ENCODE measurements at regions of chr1 and their contacts with region 1.

Region 1: GRCh38 chr1:228349701-228350171 is 56.9 kb downstream of the TRIM11 start:
- DNase-seq: no peak
- H3K4me3 ChIP-seq: no peak overlapping the region
- H3K27ac ChIP-seq: no peak overlapping the region
- H3K4me1 ChIP-seq: no peaks in the 10 kb centered on the region
- H3K27me3 ChIP-seq: no peaks in the 10 kb centered on the region
- CTCF ChIP-seq: no peak

Region 2: DNA sequence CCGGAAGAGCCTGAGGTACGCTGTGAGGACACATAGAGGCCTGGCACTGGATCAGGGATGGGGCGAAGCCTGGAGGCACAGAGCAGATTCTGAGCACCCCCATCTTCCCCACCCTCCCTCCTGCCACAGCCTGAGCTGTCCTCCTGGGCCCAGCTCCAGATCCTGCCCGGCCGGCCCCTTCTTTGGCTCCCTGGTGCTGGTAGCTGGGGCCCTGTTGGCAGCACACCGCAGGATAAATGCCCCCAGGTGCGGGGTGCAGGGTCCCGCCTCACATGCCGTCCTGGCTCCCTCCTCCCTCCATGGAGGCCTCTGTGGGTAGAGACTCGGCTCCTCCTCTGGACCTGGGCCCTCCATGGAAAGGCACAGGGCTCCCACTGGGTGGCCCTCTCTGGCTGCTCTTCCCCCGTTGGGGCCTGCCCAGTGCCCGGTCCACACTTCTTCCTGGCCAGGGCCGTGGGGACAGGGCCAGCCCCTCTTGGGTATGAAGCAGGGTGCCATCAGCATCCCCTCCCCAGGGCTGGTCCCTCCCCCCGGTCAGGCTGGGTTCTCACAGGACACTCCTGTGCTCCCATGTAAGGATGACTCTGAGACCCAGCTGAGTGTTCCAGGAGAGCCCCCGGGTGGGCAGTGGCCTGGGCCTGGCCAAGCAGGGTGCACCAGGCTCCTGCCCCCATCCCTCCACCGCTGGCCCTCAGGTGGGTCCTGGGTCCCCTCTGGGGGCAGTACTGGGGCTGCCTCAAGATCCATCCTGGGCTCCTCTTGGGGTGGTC is 143.0 kb before region 1 on chr1:
- CTCF ChIA-PET with region 1: no interaction called
- POLR2A ChIA-PET with region 1: no interaction called
- intact Hi-C with region 1: no loop called
- DNase-seq: no peak
- H3K4me3 ChIP-seq: no peak overlapping the region
- H3K27ac ChIP-seq: no peak overlapping the region
- H3K4me1 ChIP-seq: no peaks in the 10 kb centered on the region
- H3K27me3 ChIP-seq: no peaks in the 10 kb centered on the region
- CTCF ChIP-seq: no peak

Region 3: DNA sequence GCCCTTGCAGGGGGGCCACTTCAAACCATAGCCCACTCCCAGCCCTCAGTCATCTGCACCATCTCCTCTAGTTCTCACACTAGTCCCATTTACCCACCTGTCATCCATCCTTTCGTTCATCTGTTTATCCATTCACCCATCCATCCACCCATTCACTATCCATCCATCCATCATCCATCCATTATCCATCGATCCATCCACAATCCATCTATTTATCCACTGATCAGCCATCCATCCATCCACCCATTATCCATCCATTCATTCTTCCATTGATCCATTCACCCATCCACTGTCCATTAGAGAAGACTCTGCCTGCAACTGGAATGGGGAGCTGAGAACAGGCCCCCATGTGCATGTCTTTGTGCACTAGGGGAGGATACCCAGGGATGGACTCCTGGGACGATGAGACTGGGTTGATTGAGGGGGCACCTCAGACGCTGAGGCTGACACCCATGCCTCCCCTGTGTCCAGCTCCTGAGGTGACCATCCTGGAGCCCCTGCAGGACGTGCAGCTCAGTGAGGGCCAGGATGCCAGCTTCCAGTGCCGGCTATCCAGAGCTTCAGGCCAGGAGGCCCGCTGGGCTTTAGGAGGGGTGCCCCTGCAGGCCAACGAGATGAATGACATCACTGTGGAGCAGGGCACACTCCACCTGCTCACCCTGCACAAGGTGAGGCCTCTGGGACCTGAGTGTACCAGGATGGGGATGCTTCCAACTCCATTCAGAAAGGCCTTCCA is 40.9 kb before region 1 on chr1:
- CTCF ChIA-PET with region 1: no interaction called
- POLR2A ChIA-PET with region 1: no interaction called
- intact Hi-C with region 1: loop called (anchors 10 kb)
- DNase-seq: no peak
- H3K4me3 ChIP-seq: no peak overlapping the region
- H3K27ac ChIP-seq: no peak overlapping the region
- H3K4me1 ChIP-seq: no peaks in the 10 kb centered on the region
- H3K27me3 ChIP-seq: no peaks in the 10 kb centered on the region
- CTCF ChIP-seq: no peak

Region 4: DNA sequence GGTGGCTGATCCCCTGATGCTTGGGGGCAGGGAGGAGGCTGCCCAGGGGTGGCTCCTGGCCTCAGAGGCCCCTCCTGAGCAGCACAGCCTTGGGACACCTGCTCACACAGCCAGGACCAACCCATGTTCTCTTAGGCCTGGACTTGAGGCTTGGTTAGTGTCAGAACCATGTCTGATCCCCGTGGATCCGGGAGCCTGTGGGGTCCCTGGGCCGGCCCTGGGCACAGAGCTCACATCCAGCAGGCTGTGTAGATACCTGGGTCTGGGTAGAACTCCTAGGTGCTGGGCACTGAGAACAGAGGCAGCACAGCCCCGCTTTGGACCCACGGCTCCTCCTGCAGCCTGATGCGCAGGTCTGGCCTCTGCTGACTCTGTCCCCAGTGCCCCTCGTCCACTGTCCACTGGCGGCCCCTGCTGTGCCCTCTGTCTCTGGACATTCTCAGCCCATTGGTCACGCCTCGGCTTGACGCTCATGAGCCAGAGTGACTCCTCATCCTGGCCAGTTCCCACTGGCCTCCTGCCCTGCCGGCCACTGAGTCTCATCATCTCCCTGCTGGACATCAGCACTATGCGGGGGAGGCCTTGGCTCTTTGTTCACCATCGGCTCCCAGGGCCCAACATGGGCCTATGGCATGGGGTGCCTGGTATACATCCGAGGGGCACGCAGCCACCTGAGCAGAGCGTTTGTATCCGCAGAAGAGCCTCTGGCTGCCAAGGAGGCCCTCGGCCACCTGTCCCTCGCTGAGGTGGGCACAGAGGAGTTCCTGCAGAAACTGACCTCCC is 13.2 kb before region 1 on chr1:
- CTCF ChIA-PET with region 1: no interaction called
- POLR2A ChIA-PET with region 1: no interaction called
- intact Hi-C with region 1: no loop called
- DNase-seq: no peak
- H3K4me3 ChIP-seq: no peak overlapping the region
- H3K27ac ChIP-seq: no peak overlapping the region
- H3K4me1 ChIP-seq: no peaks in the 10 kb centered on the region
- H3K27me3 ChIP-seq: no peaks in the 10 kb centered on the region
- CTCF ChIP-seq: no peak

Measured in A673 (cell line).